ENCODE measurements at regions of chr21 and their contacts with region 1.

Region 1: DNA sequence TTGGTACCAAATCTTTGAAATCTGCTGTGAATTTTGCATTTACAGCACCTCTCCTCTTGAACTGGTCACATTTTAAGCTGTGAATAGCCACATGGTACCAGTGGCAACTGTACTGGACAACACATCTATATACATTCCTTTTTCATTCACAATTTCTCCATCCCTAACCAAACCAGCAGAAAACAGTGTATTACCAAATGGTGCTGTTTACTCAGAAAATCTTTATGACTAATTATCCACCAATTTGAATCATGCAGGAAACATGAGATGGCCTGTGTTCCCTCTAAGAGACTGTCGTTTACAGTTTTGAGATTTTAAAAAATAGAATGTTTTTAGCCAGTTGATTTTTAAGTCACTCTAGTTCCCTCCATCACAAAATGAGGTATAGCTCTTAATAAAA is 17.6 kb upstream of the CCT8 start:
- DNase-seq: no peak
- ATAC-seq: no peak
- H3K4me3 Mint-ChIP-seq: no peak overlapping the region
- H3K27ac Mint-ChIP-seq: no peak overlapping the region
- H3K4me1 Mint-ChIP-seq: no peaks in the 10 kb centered on the region
- H3K27me3 Mint-ChIP-seq: no peaks in the 10 kb centered on the region
- CTCF ChIP-seq: no peak

Region 2: DNA sequence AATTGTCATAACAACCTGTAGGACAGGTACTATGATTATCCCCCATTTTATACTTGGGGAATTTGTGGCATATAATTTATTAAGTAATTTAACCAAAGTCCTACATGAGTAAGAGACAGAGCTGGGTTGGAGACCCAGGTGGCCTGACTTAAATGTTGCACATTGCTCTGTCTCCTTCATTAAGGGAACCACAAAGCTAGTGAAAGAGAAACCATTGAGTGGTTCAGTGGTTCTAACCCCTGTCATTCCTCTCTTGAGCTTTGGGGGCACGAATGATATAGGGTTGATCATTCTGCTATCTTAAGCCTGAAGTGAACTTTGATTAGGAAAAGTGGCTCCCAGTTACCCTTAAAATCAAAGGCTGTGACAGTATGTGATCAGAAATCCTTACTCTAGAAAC is 34.2 kb after region 1 on chr21:
- CTCF ChIA-PET with region 1: no interaction called
- POLR2A ChIA-PET with region 1: no interaction called
- intact Hi-C with region 1: loop called (anchors 5 kb)
- DNase-seq: no peak
- ATAC-seq: peak; percentile 83
- H3K4me3 Mint-ChIP-seq: no peak overlapping the region
- H3K27ac Mint-ChIP-seq: peak overlapping the region; percentile 69
- H3K4me1 Mint-ChIP-seq: peaks cover 42% of the 10 kb centered on the region
- H3K27me3 Mint-ChIP-seq: no peaks in the 10 kb centered on the region
- CTCF ChIP-seq: no peak

Region 3: GRCh38 chr21:29164325-29164942 is 73.4 kb after region 1 on chr21:
- CTCF ChIA-PET with region 1: interaction called, 9 read pairs
- POLR2A ChIA-PET with region 1: interaction called, 4 read pairs
- intact Hi-C with region 1: loop called (anchors 2 kb)
- DNase-seq: no peak
- ATAC-seq: peak; percentile 57
- H3K4me3 Mint-ChIP-seq: no peak overlapping the region
- H3K27ac Mint-ChIP-seq: no peak overlapping the region
- H3K4me1 Mint-ChIP-seq: peaks cover 7% of the 10 kb centered on the region
- H3K27me3 Mint-ChIP-seq: no peaks in the 10 kb centered on the region
- CTCF ChIP-seq: no peak

Region 4: GRCh38 chr21:29343519-29343918 is 252.5 kb after region 1 on chr21:
- CTCF ChIA-PET with region 1: interaction called, 4 read pairs
- POLR2A ChIA-PET with region 1: no interaction called
- intact Hi-C with region 1: loop called (anchors 1 kb)
- DNase-seq: no peak
- ATAC-seq: no peak
- H3K4me3 Mint-ChIP-seq: no peak overlapping the region
- H3K27ac Mint-ChIP-seq: no peak overlapping the region
- H3K4me1 Mint-ChIP-seq: peaks cover 36% of the 10 kb centered on the region
- H3K27me3 Mint-ChIP-seq: no peaks in the 10 kb centered on the region
- CTCF ChIP-seq: no peak

Region 5: GRCh38 chr21:29477941-29478340 is 386.9 kb after region 1 on chr21:
- CTCF ChIA-PET with region 1: interaction called, 3 read pairs
- POLR2A ChIA-PET with region 1: no interaction called
- intact Hi-C with region 1: loop called (anchors 2 kb)
- DNase-seq: no peak
- ATAC-seq: no peak
- H3K4me3 Mint-ChIP-seq: no peak overlapping the region
- H3K27ac Mint-ChIP-seq: no peak overlapping the region
- H3K4me1 Mint-ChIP-seq: peaks cover 9% of the 10 kb centered on the region
- H3K27me3 Mint-ChIP-seq: no peaks in the 10 kb centered on the region
- CTCF ChIP-seq: no peak

Region 6: DNA sequence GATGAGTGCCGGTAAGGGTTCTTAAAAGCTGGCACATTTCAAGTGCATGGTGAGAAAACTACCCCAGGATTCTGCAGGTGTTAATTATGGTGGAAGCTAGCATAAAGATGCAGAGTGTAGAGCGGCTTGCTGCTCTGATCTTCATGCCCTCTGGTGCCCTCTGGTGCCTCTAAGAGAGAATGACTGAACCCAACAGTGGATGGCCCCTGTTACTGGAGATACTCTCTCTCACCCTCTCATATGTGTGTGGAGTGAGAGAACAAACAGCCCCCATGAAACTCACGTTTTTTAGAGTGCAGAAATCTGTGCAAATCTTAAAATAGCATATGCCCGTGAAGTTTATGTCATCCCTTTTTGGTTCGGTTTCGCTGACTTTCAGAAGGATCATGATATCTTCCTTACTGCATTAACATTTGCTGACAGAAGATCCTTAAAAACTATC is 758.7 kb after region 1 on chr21:
- CTCF ChIA-PET with region 1: interaction called, 5 read pairs
- POLR2A ChIA-PET with region 1: no interaction called
- intact Hi-C with region 1: loop called (anchors 1 kb)
- DNase-seq: no peak
- ATAC-seq: peak; percentile 97
- H3K4me3 Mint-ChIP-seq: no peak overlapping the region
- H3K27ac Mint-ChIP-seq: no peak overlapping the region
- H3K4me1 Mint-ChIP-seq: no peaks in the 10 kb centered on the region
- H3K27me3 Mint-ChIP-seq: peaks cover 1% of the 10 kb centered on the region
- CTCF ChIP-seq: no peak

Region 7: GRCh38 chr21:31088315-31088714 is 1997.3 kb after region 1 on chr21:
- CTCF ChIA-PET with region 1: no interaction called
- POLR2A ChIA-PET with region 1: no interaction called
- intact Hi-C with region 1: loop called (anchors 10 kb)
- DNase-seq: no peak
- ATAC-seq: no peak
- H3K4me3 Mint-ChIP-seq: no peak overlapping the region
- H3K27ac Mint-ChIP-seq: no peak overlapping the region
- H3K4me1 Mint-ChIP-seq: peaks cover 2% of the 10 kb centered on the region
- H3K27me3 Mint-ChIP-seq: peaks cover under 1% of the 10 kb centered on the region
- CTCF ChIP-seq: no peak

Measured in activated B cell treated with CpG ODN at 0.5 μM for 24 hours (primary cell).